Dorsolateral prefrontal cortex (tissue), 120 donors: ENCODE measurements at regions of chr17 and their contacts with region 1.

Region 1: DNA sequence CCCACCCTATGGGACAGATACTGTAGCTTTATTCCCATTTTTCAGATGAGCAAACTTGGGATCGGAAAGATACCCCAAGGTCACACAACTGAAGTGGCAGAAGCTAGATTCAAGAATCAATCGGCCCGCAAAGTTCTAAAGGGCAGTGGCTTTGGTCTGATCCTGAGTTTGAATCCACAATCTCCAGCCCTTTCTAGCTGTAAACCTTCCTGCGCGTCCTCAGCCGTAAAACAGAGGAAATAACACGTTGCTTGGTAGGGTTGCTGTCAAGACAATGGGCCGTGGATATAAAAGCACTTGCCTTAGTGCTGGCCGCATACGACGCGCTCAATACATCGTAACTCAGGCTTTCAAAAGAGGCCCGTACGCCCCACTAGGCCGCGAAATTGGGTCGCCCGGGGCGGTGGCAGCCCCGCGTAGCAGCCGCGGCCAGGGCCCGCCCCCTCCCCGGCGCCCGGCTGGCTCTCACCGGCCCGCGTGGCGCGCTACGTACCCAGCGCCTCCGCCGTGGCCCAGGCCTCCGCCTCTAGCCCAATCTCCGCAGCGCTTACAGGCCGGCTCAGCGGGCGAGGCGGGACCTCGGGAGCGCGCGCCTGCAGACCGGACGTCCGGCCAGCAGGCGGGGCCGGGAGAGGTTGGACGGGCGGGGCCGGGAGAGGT is at the start of gene DCAKD:
- DNase-seq: peak; percentile 74 to 95 (median 90)
- H3K4me3 ChIP-seq: peak within 1 kb of the TSS; percentile 57 to 87 (median 74)
- H3K27ac ChIP-seq: peak within 1 kb of the TSS; percentile 39 to 95 (median 89)
- H3K27me3 ChIP-seq: no peaks in the 10 kb centered on the region
- CTCF ChIP-seq: peak in 22 of 56 donors; percentile 8 to 44 (median 20)
- total RNA-seq, gene DCAKD: 46.2 to 97.6 (median 62.3) TPM

Region 2: GRCh38 chr17:45098869-45099616 is 47.9 kb after region 1 on chr17:
- intact Hi-C with region 1: loop called in 1 of 2 experiments (anchors 5 kb)
- DNase-seq: peak; percentile 78 to 96 (median 86)
- H3K4me3 ChIP-seq: peak overlapping the region in 3 of 59 donors; percentile 8 to 15 (median 11)
- H3K27ac ChIP-seq: peak overlapping the region in 56 of 59 donors; percentile 11 to 90 (median 77)
- H3K27me3 ChIP-seq: no peaks in the 10 kb centered on the region
- CTCF ChIP-seq: peak; percentile 51 to 90 (median 81)